K562 (cell line): ENCODE measurements at regions of chr3 and their contacts with region 1.

Region 1: DNA sequence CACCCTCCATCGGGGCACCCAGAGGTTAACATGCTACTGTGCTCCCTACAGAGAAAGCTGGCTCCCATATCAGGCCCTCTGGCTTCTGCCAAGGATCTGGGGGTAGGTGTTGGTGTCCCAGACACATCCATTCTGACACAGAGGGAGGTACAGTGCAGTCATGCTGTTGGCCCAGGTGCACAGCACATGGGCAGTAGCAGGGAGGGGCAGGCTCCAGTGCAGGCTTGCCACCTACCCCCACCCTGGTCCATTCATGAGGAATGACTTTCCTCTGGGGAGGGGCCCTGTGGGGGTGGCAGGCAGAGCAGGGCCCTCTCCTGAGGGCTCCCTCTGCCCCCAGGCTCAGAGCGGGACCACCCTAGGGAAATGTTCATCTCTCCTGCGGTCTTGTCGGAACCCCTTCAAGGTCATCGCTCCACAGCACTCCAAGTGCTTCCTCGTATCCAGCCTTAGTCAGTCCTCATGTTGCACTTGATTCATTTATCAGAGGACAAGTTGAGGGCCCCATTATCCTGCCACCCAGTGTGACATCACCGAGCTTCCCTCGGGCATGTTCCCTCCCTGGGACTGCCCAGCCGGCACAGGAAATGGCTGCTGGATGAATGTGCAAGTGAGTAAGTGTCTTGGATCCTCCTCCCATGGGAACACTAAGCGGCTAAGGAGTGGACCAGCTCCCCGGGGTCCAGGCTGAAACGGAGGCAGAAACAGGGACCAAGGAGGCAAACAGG is 10.0 kb downstream of the DUSP7 start:
- DNase-seq: no peak
- ATAC-seq: no peak
- H3K4me3 ChIP-seq: no peak overlapping the region
- H3K27ac ChIP-seq: no peak overlapping the region
- H3K4me1 ChIP-seq: peaks cover 3 to 39% of the 10 kb centered on the region in 2 experiments; a peak in 4 of 5 replicates
- H3K27me3 ChIP-seq: peaks cover 0 to 5% of the 10 kb centered on the region in 2 experiments; a peak in 1 of 5 replicates
- CTCF ChIP-seq: no peak
- EP300 ChIP-seq: no peak
- POLR2A ChIP-seq: no peak
- RAD21 ChIP-seq: no peak

Region 2: DNA sequence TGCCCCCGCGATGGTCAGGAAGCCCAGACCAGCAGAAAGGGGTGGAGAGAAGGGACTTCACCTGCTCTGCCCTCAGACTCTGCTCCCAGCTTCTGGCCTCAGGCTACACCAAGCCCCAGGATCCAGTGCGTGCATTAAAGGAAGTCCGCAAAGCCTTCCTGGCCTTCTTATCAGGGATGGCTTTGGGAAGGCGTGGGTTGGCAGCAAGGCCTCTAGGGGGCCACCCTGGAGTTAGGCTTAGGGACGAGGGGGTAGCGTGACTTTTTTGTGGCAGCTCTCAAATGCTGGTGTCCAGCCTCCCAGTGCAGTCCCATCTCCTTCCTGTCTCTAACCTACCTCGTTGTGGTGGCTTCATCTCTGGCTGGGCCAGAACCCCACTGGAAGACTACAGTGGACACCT is 31.7 kb before region 1 on chr3:
- CTCF ChIA-PET with region 1: no interaction called
- POLR2A ChIA-PET with region 1: no interaction called
- in situ Hi-C with region 1: loop called (anchors 5 kb)
- intact Hi-C with region 1: no loop called
- DNase-seq: peak; percentile 61 to 73 (median 68)
- ATAC-seq: peak; percentile 87
- H3K4me3 ChIP-seq: no peak overlapping the region
- H3K27ac ChIP-seq: no peak overlapping the region; the same call in 2 of the 3 replicates
- H3K4me1 ChIP-seq: peaks cover 20 to 30% of the 10 kb centered on the region in 2 experiments
- H3K27me3 ChIP-seq: no peaks in the 10 kb centered on the region
- CTCF ChIP-seq: peak; percentile 60 to 65 (median 62)
- EP300 ChIP-seq: no peak
- POLR2A ChIP-seq: no peak
- RAD21 ChIP-seq: peak; percentile 19 to 57; a peak in 3 of 4 replicates